ENCODE measurements at regions of chrX and their contacts with region 1.

Region 1: GRCh38 chrX:72126539-72127140 is 5.1 kb downstream of the RTL5 start:
- DNase-seq: peak; percentile 90
- H3K4me3 Mint-ChIP-seq: no peak overlapping the region
- H3K27ac Mint-ChIP-seq: peak overlapping the region; percentile 36
- H3K4me1 Mint-ChIP-seq: peaks cover 4% of the 10 kb centered on the region
- H3K27me3 Mint-ChIP-seq: peaks cover 19% of the 10 kb centered on the region

Region 2: DNA sequence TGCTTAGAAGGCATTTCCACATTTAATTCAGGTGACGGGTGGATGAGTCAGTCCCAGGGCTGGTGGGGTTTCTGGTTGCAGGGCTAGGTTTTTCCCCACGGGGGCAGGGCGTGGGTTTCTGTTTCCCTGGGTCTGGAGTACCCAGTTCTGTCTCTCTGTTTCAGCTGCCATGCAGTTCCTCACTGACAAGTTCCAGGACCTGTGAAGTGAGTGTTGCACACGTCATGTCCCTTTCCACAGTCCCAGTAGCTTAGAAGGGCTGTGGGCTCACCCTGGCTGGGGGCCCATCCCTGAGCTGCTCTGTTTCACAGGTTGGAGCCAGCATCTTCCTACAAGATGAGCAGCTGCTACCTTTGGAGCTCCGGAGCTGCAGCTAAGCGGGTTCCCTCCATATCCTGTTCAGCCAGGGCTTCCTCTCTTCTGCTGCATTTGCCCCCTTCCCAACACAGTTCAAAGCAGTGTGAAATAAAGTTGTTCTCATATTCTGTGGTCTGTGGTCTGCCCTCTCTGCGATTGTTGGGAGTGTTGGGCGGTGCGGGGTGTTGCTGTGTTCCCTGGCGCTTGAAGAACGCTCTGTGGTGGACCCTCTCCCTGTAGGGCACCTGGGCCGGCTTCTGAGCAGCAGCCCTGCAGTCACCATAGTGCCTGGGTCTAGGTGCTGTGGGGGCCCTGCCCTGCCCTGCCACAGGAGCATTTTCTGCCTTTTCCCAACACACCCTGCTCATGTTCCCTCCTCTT is 455.4 kb before region 1 on chrX:
- CTCF ChIA-PET with region 1: no interaction called
- intact Hi-C with region 1: loop called (anchors 1 kb)
- DNase-seq: peak; percentile 80
- H3K4me3 Mint-ChIP-seq: no peak overlapping the region
- H3K27ac Mint-ChIP-seq: no peak overlapping the region
- H3K4me1 Mint-ChIP-seq: peaks cover 20% of the 10 kb centered on the region
- H3K27me3 Mint-ChIP-seq: peaks cover 3% of the 10 kb centered on the region

Region 3: DNA sequence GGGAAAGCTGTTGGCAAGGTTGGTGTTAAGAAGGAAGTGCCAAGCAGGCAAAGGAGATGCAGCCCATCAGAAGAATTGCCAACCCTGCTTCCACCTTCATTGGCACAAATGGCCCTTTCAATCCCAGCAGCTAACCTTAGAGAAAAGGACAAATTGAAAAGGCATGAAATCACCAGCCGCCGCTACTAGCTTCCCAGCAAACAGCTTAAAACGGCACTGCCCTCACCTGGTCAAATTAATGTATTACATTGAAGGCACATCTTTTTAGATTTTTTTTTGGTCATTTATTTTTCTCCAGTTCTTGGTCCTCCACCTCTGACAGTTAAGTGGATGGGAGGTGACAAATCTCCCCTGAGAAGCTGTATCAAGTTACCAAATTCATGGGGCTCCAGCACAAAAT is 267.0 kb before region 1 on chrX:
- CTCF ChIA-PET with region 1: no interaction called
- intact Hi-C with region 1: loop called (anchors 5 kb)
- DNase-seq: peak; percentile 58
- H3K4me3 Mint-ChIP-seq: no peak overlapping the region
- H3K27ac Mint-ChIP-seq: no peak overlapping the region
- H3K4me1 Mint-ChIP-seq: no peaks in the 10 kb centered on the region
- H3K27me3 Mint-ChIP-seq: peaks cover 3% of the 10 kb centered on the region

Region 4: GRCh38 chrX:71910986-71911730 is 215.5 kb before region 1 on chrX:
- CTCF ChIA-PET with region 1: interaction called, 5 read pairs
- intact Hi-C with region 1: loop called (anchors 1 kb)
- DNase-seq: peak; percentile 30
- H3K4me3 Mint-ChIP-seq: peak overlapping the region; percentile 43
- H3K27ac Mint-ChIP-seq: no peak overlapping the region
- H3K4me1 Mint-ChIP-seq: peaks cover 2% of the 10 kb centered on the region
- H3K27me3 Mint-ChIP-seq: peaks cover 34% of the 10 kb centered on the region

Region 5: GRCh38 chrX:71998836-71999509 is 127.7 kb before region 1 on chrX:
- CTCF ChIA-PET with region 1: interaction called, 13 read pairs
- intact Hi-C with region 1: loop called (anchors 1 kb)
- DNase-seq: peak; percentile 49
- H3K4me3 Mint-ChIP-seq: no peak overlapping the region
- H3K27ac Mint-ChIP-seq: no peak overlapping the region
- H3K4me1 Mint-ChIP-seq: no peaks in the 10 kb centered on the region
- H3K27me3 Mint-ChIP-seq: no peaks in the 10 kb centered on the region

Region 6: DNA sequence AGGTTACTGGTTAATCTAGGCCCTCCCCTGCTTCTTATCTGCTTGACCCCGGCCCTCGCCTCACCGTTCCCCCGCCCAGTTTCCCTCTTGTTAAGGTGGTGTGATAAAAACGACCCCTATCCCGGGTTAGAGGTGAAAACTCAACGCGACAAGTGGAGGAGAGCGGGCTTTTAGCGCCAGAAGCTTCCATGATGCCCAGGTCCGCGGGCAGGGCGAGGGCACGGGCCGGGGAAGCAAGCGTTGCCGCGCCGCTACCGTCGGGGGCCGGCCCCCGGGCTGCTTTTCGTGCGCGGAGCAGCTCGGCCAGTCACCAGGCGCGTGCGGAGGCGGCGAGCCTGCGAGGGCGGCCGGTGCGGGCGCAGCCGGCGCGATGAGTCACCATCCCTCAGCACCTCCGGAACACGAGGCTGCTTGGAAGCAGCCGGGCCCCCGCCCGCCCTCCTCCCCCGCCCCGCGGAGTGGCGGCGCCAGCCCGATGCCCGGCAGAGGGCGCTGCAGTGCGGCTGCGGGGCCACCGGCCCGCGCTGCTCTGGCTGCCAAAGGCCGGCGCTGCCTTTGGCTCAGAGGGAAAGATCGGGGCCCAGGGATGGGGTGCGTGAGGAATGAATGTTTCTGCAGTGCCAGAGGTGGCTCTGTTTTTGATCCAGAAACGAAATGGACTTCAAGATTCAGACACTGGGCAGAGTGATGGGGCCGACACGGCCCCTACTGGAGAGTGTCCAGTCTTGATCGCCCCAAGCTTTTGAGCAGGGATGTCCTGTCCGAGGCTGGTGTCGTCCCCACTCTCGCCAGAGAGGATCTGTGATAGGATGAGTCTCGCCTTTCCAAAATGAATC is 108.1 kb before region 1 on chrX:
- CTCF ChIA-PET with region 1: interaction called, 21 read pairs
- intact Hi-C with region 1: loop called (anchors 1 kb)
- DNase-seq: peak; percentile 84
- H3K4me3 Mint-ChIP-seq: no peak overlapping the region
- H3K27ac Mint-ChIP-seq: no peak overlapping the region
- H3K4me1 Mint-ChIP-seq: peaks cover 25% of the 10 kb centered on the region
- H3K27me3 Mint-ChIP-seq: peaks cover 10% of the 10 kb centered on the region

Region 7: DNA sequence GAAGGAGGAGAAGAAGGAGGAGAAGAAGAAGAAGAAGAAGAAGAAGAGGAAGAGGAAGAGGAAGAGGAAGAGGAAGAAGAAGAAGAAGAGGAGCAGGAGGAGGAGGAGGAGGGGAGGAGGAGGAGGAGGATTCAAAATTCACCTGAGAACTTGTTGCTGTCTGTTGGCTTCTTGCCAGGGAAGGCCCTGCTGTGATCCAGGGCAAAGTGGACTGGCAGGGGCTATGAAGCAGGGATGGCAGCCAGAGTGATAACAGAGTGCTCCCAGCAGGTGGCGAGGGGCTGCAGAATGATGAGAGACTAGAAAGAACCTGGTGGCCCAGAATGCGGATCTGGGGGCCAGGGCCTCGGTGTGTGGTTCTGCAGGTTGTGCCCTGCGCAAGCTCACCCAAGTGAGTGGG is 77.7 kb before region 1 on chrX:
- CTCF ChIA-PET with region 1: interaction called, 4 read pairs
- intact Hi-C with region 1: loop called (anchors 1 kb)
- DNase-seq: peak; percentile 22
- H3K4me3 Mint-ChIP-seq: no peak overlapping the region
- H3K27ac Mint-ChIP-seq: no peak overlapping the region
- H3K4me1 Mint-ChIP-seq: peaks cover 3% of the 10 kb centered on the region
- H3K27me3 Mint-ChIP-seq: no peaks in the 10 kb centered on the region